ENCODE measurements at regions of chr3 and their contacts with region 1.

Region 1: DNA sequence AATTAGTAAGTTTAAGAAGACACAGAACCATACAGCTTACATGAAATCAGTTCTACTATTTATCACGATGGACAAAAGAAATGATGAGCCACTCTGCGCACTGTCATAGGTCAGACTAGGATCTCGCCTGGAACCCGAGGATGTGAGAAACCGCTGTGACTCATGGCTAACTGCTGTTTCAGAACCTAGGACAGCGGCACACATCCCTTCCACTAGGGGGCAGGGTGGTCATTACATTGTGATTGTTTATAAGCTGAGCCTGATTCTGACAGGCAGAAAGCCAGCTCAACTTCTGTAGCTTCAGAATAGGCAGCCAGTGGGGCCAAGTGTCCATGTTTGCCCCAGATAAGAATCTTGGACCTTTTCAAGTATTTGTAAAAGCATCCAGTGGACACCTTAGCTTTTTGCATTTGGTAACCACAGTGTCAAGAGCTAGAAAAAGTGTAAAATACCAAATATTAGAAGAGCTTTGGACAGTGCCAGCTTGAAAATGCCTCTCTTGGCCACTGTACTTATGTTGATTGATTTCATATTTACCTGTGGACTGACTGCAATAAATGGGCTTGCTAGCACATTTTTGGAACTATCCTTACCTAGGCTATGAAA is 115.8 kb downstream of the KBTBD8 start:
- DNase-seq: peak; percentile 86
- ATAC-seq: peak; percentile 93
- H3K4me3 ChIP-seq: no peak overlapping the region
- H3K27ac ChIP-seq: no peak overlapping the region
- H3K4me1 ChIP-seq: no peaks in the 10 kb centered on the region; the same call in 1 of the 2 replicates
- H3K27me3 ChIP-seq: no peaks in the 10 kb centered on the region
- CTCF ChIP-seq: peak; percentile 99
- POLR2A ChIP-seq: no peak
- RAD21 ChIP-seq: peak; percentile 77

Region 2: GRCh38 chr3:66938338-66938963 is 175.5 kb before region 1 on chr3:
- CTCF ChIA-PET with region 1: interaction called, 8 read pairs
- POLR2A ChIA-PET with region 1: no interaction called
- dilution Hi-C with region 1: no loop called
- in situ Hi-C with region 1: no loop called
- intact Hi-C with region 1: loop called (anchors 5 kb)
- DNase-seq: peak; percentile 67
- ATAC-seq: peak; percentile 100
- H3K4me3 ChIP-seq: no peak overlapping the region
- H3K27ac ChIP-seq: no peak overlapping the region
- H3K4me1 ChIP-seq: no peaks in the 10 kb centered on the region
- H3K27me3 ChIP-seq: peaks cover 2% of the 10 kb centered on the region
- CTCF ChIP-seq: peak; percentile 74
- POLR2A ChIP-seq: no peak
- RAD21 ChIP-seq: peak; percentile 77

Region 3: GRCh38 chr3:67357610-67358458 is 243.9 kb after region 1 on chr3:
- CTCF ChIA-PET with region 1: interaction called, 5 read pairs
- POLR2A ChIA-PET with region 1: no interaction called
- dilution Hi-C with region 1: no loop called
- in situ Hi-C with region 1: loop called (anchors 25 kb)
- intact Hi-C with region 1: no loop called
- DNase-seq: peak; percentile 35
- ATAC-seq: peak; percentile 79
- H3K4me3 ChIP-seq: no peak overlapping the region
- H3K27ac ChIP-seq: no peak overlapping the region
- H3K4me1 ChIP-seq: no peaks in the 10 kb centered on the region
- H3K27me3 ChIP-seq: no peaks in the 10 kb centered on the region
- CTCF ChIP-seq: peak; percentile 39
- POLR2A ChIP-seq: no peak
- RAD21 ChIP-seq: peak; percentile 30; the same call in 1 of the 2 replicates

Region 4: GRCh38 chr3:67605377-67605776 is 491.5 kb after region 1 on chr3:
- CTCF ChIA-PET with region 1: no interaction called
- POLR2A ChIA-PET with region 1: no interaction called
- dilution Hi-C with region 1: no loop called
- in situ Hi-C with region 1: no loop called
- intact Hi-C with region 1: loop called (anchors 5 kb)
- DNase-seq: peak; percentile 83
- ATAC-seq: peak; percentile 95
- H3K4me3 ChIP-seq: no peak overlapping the region
- H3K27ac ChIP-seq: no peak overlapping the region
- H3K4me1 ChIP-seq: no peaks in the 10 kb centered on the region; the same call in 1 of the 2 replicates
- H3K27me3 ChIP-seq: no peaks in the 10 kb centered on the region
- CTCF ChIP-seq: peak; percentile 57
- POLR2A ChIP-seq: no peak
- RAD21 ChIP-seq: peak; percentile 54

Region 5: GRCh38 chr3:68017067-68017466 is 903.2 kb after region 1 on chr3:
- CTCF ChIA-PET with region 1: no interaction called
- POLR2A ChIA-PET with region 1: no interaction called
- dilution Hi-C with region 1: no loop called
- in situ Hi-C with region 1: no loop called
- intact Hi-C with region 1: loop called (anchors 10 kb)
- DNase-seq: no peak
- ATAC-seq: no peak
- H3K4me3 ChIP-seq: no peak overlapping the region
- H3K27ac ChIP-seq: no peak overlapping the region
- H3K4me1 ChIP-seq: no peaks in the 10 kb centered on the region
- H3K27me3 ChIP-seq: no peaks in the 10 kb centered on the region
- CTCF ChIP-seq: no peak
- POLR2A ChIP-seq: no peak
- RAD21 ChIP-seq: no peak

Region 6: DNA sequence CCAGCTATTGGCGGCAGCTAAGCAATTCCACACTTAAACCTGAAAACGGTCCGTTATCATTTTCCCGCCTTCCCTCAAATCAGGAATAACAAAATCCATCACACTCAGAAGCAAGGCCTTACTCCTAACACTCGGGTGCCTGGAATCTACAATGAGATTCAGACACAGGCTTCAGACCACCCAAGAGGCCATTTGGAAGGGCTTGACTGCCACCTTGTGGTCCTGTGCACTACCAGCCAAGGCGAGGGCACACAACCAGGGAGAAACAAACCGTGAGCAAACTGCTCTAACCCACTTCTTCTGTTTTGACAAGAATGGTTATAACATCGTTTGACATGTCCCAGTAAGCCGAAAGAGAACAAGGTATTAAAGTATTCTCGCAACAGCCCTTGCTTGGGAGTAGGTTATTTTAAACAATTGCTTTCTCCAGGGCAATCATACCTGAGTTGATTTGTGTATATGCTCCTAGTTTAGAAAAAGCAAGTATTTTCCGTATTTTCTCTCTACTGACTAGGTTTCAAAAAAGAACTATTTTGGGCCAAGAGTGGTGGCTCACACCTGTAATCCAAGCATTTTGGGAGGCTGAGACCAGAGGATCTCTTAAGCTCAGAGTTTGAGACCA is 1858.6 kb after region 1 on chr3:
- CTCF ChIA-PET with region 1: interaction called, 5 read pairs
- POLR2A ChIA-PET with region 1: no interaction called
- dilution Hi-C with region 1: no loop called
- in situ Hi-C with region 1: no loop called
- intact Hi-C with region 1: loop called (anchors 1 kb)
- DNase-seq: peak; percentile 51
- ATAC-seq: peak; percentile 97
- H3K4me3 ChIP-seq: no peak overlapping the region
- H3K27ac ChIP-seq: no peak overlapping the region
- H3K4me1 ChIP-seq: peaks cover 3% of the 10 kb centered on the region; the same call in 1 of the 2 replicates
- H3K27me3 ChIP-seq: peaks cover 16% of the 10 kb centered on the region
- CTCF ChIP-seq: peak; percentile 71
- POLR2A ChIP-seq: no peak
- RAD21 ChIP-seq: peak; percentile 76